CD4-positive, alpha-beta memory T cell (primary cell): ENCODE measurements at regions of chr11 and their contacts with region 1.

Region 1: GRCh38 chr11:47373876-47374720 is 4.2 kb downstream of the SPI1 start:
- DNase-seq: peak; percentile 78 to 83 (median 80)
- H3K4me3 ChIP-seq: no peak overlapping the region
- H3K4me3 Mint-ChIP-seq: no peak overlapping the region
- H3K27ac ChIP-seq: no peak overlapping the region
- H3K27ac Mint-ChIP-seq: peak overlapping the region in 1 of 7 donors; percentile 52
- H3K4me1 ChIP-seq: peaks cover 7% of the 10 kb centered on the region
- H3K4me1 Mint-ChIP-seq: peaks cover 0 to 8% (median 3%) of the 10 kb centered on the region in 4 donors
- H3K27me3 ChIP-seq: no peaks in the 10 kb centered on the region
- H3K27me3 Mint-ChIP-seq: no peaks in the 10 kb centered on the region

Region 2: DNA sequence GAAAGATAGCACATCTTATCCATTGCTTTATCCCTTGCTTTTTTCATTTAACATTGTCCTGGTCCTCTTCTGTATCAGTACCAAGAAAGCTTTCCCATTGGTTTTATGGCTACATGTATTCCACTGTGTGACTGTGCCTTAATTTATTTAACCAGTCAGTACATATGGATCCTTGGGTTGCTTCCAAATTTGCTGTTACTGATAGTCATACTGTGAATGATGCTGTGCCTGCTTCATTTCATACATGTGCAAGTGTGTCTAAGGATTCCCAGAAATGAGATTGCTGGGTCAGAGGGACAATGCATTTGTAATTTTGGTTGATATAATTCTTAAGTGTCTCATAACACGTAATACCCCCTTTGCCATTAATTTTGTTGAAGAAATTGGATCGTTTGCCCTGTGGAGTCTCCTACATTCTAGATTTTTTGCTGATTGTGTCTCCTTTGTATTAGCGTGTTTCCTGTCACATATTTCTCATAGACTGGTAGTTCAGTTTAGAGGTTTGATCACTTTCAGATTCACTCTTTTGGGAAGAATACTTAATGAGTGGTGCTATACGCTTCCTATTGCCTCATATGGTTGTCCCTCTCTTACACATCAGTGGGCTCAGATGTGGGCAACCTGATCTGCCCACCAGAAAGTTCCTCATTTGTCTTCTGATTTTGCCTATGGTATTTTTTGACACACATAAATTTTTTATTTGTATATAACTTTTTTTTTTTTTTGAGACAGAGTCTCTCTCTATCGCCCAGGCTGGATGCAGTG is 56.9 kb before region 1 on chr11:
- CTCF ChIA-PET with region 1: interaction called, 12 read pairs
- POLR2A ChIA-PET with region 1: no interaction called
- intact Hi-C with region 1: no loop called
- DNase-seq: no peak
- H3K4me3 ChIP-seq: no peak overlapping the region
- H3K4me3 Mint-ChIP-seq: no peak overlapping the region
- H3K27ac ChIP-seq: no peak overlapping the region
- H3K27ac Mint-ChIP-seq: peak overlapping the region in 5 of 7 donors; percentile 12 to 82 (median 24)
- H3K4me1 ChIP-seq: no peaks in the 10 kb centered on the region
- H3K4me1 Mint-ChIP-seq: peaks cover 0 to 4% (median 0%) of the 10 kb centered on the region in 4 donors
- H3K27me3 ChIP-seq: no peaks in the 10 kb centered on the region
- H3K27me3 Mint-ChIP-seq: no peaks in the 10 kb centered on the region

Region 3: GRCh38 chr11:47394322-47395222 is 20.5 kb after region 1 on chr11:
- CTCF ChIA-PET with region 1: interaction called, 149 read pairs
- POLR2A ChIA-PET with region 1: interaction called, 18 read pairs
- intact Hi-C with region 1: no loop called
- DNase-seq: peak; percentile 36 to 61 (median 42)
- H3K4me3 ChIP-seq: peak overlapping the region; percentile 47 to 69
- H3K4me3 Mint-ChIP-seq: peak overlapping the region; percentile 50 to 76 (median 68)
- H3K27ac ChIP-seq: peak overlapping the region; percentile 77
- H3K27ac Mint-ChIP-seq: peak overlapping the region; percentile 73 to 91 (median 89)
- H3K4me1 ChIP-seq: peaks cover 58% of the 10 kb centered on the region
- H3K4me1 Mint-ChIP-seq: peaks cover 17 to 70% (median 42%) of the 10 kb centered on the region in 4 donors
- H3K27me3 ChIP-seq: no peaks in the 10 kb centered on the region
- H3K27me3 Mint-ChIP-seq: no peaks in the 10 kb centered on the region

Region 4: GRCh38 chr11:47399860-47400767 is 26.0 kb after region 1 on chr11:
- CTCF ChIA-PET with region 1: interaction called, 149 read pairs
- POLR2A ChIA-PET with region 1: interaction called, 18 read pairs
- intact Hi-C with region 1: loop called (anchors 2 kb)
- DNase-seq: peak in 4 of 5 donors; percentile 21 to 38 (median 26)
- H3K4me3 ChIP-seq: peak overlapping the region in 1 of 2 donors; percentile 61
- H3K4me3 Mint-ChIP-seq: peak overlapping the region; percentile 80 to 95 (median 84)
- H3K27ac ChIP-seq: peak overlapping the region; percentile 62
- H3K27ac Mint-ChIP-seq: peak overlapping the region; percentile 85 to 94 (median 88)
- H3K4me1 ChIP-seq: peaks cover 31% of the 10 kb centered on the region
- H3K4me1 Mint-ChIP-seq: peaks cover 12 to 40% (median 27%) of the 10 kb centered on the region in 4 donors
- H3K27me3 ChIP-seq: no peaks in the 10 kb centered on the region
- H3K27me3 Mint-ChIP-seq: no peaks in the 10 kb centered on the region

Region 5: DNA sequence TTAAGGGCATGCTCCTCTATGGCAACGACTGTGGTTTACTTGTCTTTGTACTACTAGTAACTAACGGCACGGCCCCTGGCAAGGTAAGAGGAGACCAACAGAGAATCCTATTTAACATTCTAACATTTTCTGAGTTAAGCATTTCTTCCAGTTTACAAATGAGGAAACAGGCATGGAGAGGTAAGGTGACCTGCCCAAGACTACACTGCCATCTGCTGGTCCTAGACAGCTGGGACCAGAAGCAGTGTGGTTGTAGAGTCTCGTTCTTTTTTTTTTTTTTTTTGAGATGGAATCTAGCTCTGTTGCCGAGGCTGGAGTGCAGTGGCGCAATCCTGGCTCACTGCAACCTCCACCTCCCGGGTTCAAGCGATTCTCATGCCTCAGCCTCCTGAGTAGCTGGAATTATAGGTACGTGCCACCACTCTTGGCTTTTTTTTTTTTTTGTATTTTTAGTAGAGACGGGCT is 80.1 kb after region 1 on chr11:
- CTCF ChIA-PET with region 1: interaction called, 29 read pairs
- POLR2A ChIA-PET with region 1: no interaction called
- intact Hi-C with region 1: loop called (anchors 1 kb)
- DNase-seq: peak; percentile 63 to 72 (median 68)
- H3K4me3 ChIP-seq: no peak overlapping the region
- H3K4me3 Mint-ChIP-seq: peak overlapping the region in 2 of 8 donors; percentile 39 to 44
- H3K27ac ChIP-seq: no peak overlapping the region
- H3K27ac Mint-ChIP-seq: peak overlapping the region in 3 of 7 donors; percentile 27 to 36 (median 28)
- H3K4me1 ChIP-seq: peaks cover 10% of the 10 kb centered on the region
- H3K4me1 Mint-ChIP-seq: peaks cover 0 to 9% (median 5%) of the 10 kb centered on the region in 4 donors
- H3K27me3 ChIP-seq: no peaks in the 10 kb centered on the region
- H3K27me3 Mint-ChIP-seq: no peaks in the 10 kb centered on the region

Region 6: DNA sequence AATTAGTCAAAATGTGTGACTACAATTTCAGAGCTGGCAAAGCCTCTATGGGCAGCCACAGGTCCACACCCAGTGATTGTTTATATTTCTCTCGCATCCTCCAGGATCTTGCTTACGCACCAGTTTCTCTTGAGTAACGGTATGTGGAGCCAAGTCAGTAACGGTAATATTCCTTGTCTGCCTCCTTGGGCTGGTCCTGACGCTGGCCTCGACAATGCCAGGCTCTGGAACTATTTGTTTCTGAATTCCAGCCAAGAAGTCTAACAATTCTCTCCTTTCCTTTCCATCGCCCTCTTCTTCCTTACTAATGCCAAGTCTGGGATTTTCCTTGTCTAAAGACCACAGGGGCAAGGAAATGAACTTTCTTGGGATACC is 484.1 kb after region 1 on chr11:
- CTCF ChIA-PET with region 1: interaction called, 12 read pairs
- POLR2A ChIA-PET with region 1: no interaction called
- intact Hi-C with region 1: no loop called
- DNase-seq: no peak
- H3K4me3 ChIP-seq: no peak overlapping the region
- H3K4me3 Mint-ChIP-seq: peak overlapping the region in 3 of 8 donors; percentile 9 to 42 (median 31)
- H3K27ac ChIP-seq: no peak overlapping the region
- H3K27ac Mint-ChIP-seq: peak overlapping the region in 4 of 7 donors; percentile 9 to 83 (median 18)
- H3K4me1 ChIP-seq: peaks cover 33% of the 10 kb centered on the region
- H3K4me1 Mint-ChIP-seq: peaks cover 21 to 44% (median 32%) of the 10 kb centered on the region in 4 donors
- H3K27me3 ChIP-seq: no peaks in the 10 kb centered on the region
- H3K27me3 Mint-ChIP-seq: no peaks in the 10 kb centered on the region